T-cell (primary cell): ENCODE measurements at regions of chr12 and their contacts with region 1.

Region 1: DNA sequence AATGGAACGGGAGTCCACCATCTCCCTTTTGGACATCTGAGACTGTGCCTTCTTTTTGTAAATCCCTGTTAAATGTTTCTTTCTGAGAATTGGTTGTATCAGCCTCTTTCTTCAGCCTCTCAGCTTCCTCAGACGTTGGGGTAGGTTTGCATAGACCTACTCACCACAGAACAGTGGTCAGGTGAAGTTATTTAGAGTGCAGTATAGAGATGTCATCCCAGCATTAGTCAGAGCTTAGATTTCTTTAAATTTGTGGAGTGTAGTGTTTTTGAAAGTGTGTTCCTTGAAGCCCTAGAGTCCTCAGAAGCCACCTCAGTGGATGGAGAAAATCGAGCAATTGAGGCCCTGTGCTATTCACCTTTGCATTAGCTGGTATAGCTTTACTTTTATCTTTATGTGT is 8.9 kb upstream of the EEA1 start:
- DNase-seq: no peak
- ATAC-seq: no peak
- H3K4me3 ChIP-seq: no peak overlapping the region
- H3K4me3 Mint-ChIP-seq: no peak overlapping the region
- H3K27ac ChIP-seq: no peak overlapping the region
- H3K27ac Mint-ChIP-seq: no peak overlapping the region
- H3K4me1 ChIP-seq: no peaks in the 10 kb centered on the region
- H3K4me1 Mint-ChIP-seq: no peaks in the 10 kb centered on the region
- H3K27me3 ChIP-seq: no peaks in the 10 kb centered on the region
- H3K27me3 Mint-ChIP-seq: no peaks in the 10 kb centered on the region

Region 2: GRCh38 chr12:92915365-92915764 is 22.7 kb before region 1 on chr12:
- CTCF ChIA-PET with region 1: no interaction called
- POLR2A ChIA-PET with region 1: no interaction called
- DNase-seq: no peak
- ATAC-seq: no peak
- H3K4me3 ChIP-seq: no peak overlapping the region
- H3K4me3 Mint-ChIP-seq: no peak overlapping the region
- H3K27ac ChIP-seq: no peak overlapping the region
- H3K27ac Mint-ChIP-seq: no peak overlapping the region
- H3K4me1 ChIP-seq: peaks cover 0 to 6% of the 10 kb centered on the region in 2 experiments
- H3K4me1 Mint-ChIP-seq: peaks cover 35 to 49% (median 49%) of the 10 kb centered on the region in 3 donors
- H3K27me3 ChIP-seq: no peaks in the 10 kb centered on the region
- H3K27me3 Mint-ChIP-seq: no peaks in the 10 kb centered on the region

Region 3: DNA sequence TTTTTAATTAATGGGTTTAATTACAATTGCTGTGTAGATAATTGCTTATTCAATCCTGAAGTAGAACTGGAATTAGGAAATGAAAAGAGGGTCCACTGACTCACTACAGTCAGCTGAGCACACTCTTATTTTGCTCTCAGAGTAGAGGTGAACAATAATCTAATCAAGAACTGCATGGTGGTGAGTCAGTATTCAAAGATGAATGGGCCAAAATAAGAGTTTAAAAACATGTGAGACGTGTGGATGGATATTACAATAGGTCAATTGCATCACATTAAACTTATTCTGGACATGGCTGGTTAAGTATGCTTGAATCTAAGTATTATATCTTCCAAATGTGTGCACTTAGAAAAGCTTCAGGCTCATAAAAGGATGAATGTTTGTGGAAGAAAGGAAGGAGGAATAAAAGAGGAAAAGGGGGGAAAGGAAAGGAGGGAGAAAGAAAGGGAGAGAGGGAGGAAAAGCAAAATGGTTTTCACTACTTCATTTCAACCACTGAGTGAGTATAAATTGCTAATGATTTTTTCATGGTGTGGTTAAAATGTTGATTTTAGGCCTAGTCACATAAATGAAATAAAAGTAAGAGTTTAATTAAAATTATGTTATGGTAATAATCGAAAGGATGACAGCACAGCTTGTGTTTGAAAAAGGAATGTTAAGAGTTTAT is 18.1 kb after region 1 on chr12:
- CTCF ChIA-PET with region 1: interaction called in 1 of 2 experiments, 10 read pairs
- POLR2A ChIA-PET with region 1: interaction called in 1 of 2 experiments, 9 read pairs
- DNase-seq: no peak
- ATAC-seq: no peak
- H3K4me3 ChIP-seq: no peak overlapping the region
- H3K4me3 Mint-ChIP-seq: no peak overlapping the region
- H3K27ac ChIP-seq: no peak overlapping the region
- H3K27ac Mint-ChIP-seq: no peak overlapping the region
- H3K4me1 ChIP-seq: no peaks in the 10 kb centered on the region
- H3K4me1 Mint-ChIP-seq: no peaks in the 10 kb centered on the region
- H3K27me3 ChIP-seq: peaks cover 0 to 2% of the 10 kb centered on the region in 2 experiments
- H3K27me3 Mint-ChIP-seq: no peaks in the 10 kb centered on the region

Region 4: GRCh38 chr12:93008044-93008778 is 70.2 kb after region 1 on chr12:
- CTCF ChIA-PET with region 1: no interaction called
- POLR2A ChIA-PET with region 1: no interaction called
- DNase-seq: no peak
- ATAC-seq: no peak
- H3K4me3 ChIP-seq: no peak overlapping the region
- H3K4me3 Mint-ChIP-seq: no peak overlapping the region
- H3K27ac ChIP-seq: no peak overlapping the region
- H3K27ac Mint-ChIP-seq: no peak overlapping the region
- H3K4me1 ChIP-seq: no peaks in the 10 kb centered on the region
- H3K4me1 Mint-ChIP-seq: no peaks in the 10 kb centered on the region
- H3K27me3 ChIP-seq: peaks cover 0 to 7% of the 10 kb centered on the region in 2 experiments
- H3K27me3 Mint-ChIP-seq: peaks cover 0 to 2% of the 10 kb centered on the region in 2 donors

Region 5: DNA sequence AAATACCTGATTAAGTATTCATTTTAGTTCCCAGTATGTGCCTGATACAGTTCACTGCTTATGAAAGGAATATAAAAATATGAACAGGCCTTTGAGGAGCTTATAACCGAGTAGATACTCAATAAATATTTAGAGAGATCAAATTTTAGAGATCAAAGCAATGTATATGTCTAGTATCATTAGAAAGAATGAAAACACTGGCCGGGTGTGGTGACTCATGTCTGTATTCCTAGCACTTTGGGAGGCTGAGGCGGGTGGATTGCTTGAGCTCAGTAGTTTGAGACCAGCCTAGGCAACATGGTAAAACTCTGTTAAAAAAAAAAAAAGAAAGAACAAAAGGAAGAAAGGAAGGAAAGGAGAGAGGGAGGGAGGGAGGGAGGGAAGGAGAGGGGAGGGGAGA is 104.3 kb after region 1 on chr12:
- CTCF ChIA-PET with region 1: no interaction called
- POLR2A ChIA-PET with region 1: no interaction called
- DNase-seq: no peak
- ATAC-seq: no peak
- H3K4me3 ChIP-seq: no peak overlapping the region
- H3K4me3 Mint-ChIP-seq: no peak overlapping the region
- H3K27ac ChIP-seq: no peak overlapping the region
- H3K27ac Mint-ChIP-seq: no peak overlapping the region
- H3K4me1 ChIP-seq: no peaks in the 10 kb centered on the region
- H3K4me1 Mint-ChIP-seq: no peaks in the 10 kb centered on the region
- H3K27me3 ChIP-seq: no peaks in the 10 kb centered on the region
- H3K27me3 Mint-ChIP-seq: peaks cover 0 to 8% of the 10 kb centered on the region in 2 donors